GM12878 (cell line): ENCODE measurements at regions of chr15 and their contacts with region 1.

Region 1: DNA sequence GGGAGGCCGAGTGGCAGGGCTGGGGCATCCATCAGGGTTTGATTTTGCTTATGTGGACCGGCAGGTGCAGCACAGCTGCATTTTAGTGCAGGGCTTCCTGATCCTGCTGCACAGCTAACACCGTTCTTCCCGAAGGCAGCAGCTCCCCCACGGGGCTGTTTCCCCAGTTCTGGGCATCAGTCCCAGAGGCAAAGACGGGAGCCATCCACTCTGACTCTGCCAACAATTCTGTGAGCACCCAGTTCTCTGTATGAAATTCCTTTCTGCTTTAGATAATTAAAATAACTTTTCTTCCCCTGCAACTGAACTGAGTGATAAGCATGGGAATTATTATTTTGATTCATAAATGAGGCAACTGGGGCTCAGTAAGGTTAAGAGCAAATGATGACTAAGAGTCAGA is 262.9 kb upstream of the ATP10A start:
- DNase-seq: no peak
- ATAC-seq: no peak
- H3K4me3 ChIP-seq: no peak overlapping the region
- H3K27ac ChIP-seq: no peak overlapping the region
- H3K4me1 ChIP-seq: no peaks in the 10 kb centered on the region
- H3K27me3 ChIP-seq: no peaks in the 10 kb centered on the region
- CTCF ChIP-seq: no peak
- EP300 ChIP-seq: no peak
- POLR2A ChIP-seq: no peak
- RAD21 ChIP-seq: no peak

Region 2: DNA sequence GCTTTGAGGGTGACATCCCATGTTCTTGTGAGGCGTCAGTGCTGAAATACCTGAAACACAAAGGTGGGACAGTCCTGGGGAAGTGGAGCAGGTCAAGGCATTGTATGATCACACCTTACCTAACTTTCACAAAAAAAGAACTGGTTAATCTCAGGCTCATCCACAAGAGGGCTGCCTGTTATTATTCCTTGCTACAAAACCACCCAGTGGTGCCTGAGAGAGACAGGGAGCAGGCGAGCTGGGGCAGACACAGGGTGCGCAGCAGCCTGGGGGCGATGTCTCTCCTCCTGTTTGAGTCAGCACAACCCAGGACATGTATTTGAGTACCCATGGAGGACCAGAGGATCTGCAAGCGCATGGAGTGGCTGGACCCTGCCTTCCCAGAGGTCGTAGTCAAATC is 53.8 kb after region 1 on chr15:
- CTCF ChIA-PET with region 1: no interaction called
- POLR2A ChIA-PET with region 1: no interaction called
- RAD21 ChIA-PET with region 1: no interaction called
- SMC1A ChIA-PET with region 1: no interaction called
- in situ Hi-C with region 1: loop called (anchors 5 kb)
- intact Hi-C with region 1: no loop called
- DNase-seq: no peak
- ATAC-seq: no peak
- H3K4me3 ChIP-seq: no peak overlapping the region
- H3K27ac ChIP-seq: no peak overlapping the region
- H3K4me1 ChIP-seq: no peaks in the 10 kb centered on the region
- H3K27me3 ChIP-seq: no peaks in the 10 kb centered on the region
- CTCF ChIP-seq: no peak
- EP300 ChIP-seq: no peak
- POLR2A ChIP-seq: no peak
- RAD21 ChIP-seq: no peak